Sciatic nerve (tissue), 2 donors: ENCODE measurements at regions of chr7 and their contacts with region 1.

Region 1: DNA sequence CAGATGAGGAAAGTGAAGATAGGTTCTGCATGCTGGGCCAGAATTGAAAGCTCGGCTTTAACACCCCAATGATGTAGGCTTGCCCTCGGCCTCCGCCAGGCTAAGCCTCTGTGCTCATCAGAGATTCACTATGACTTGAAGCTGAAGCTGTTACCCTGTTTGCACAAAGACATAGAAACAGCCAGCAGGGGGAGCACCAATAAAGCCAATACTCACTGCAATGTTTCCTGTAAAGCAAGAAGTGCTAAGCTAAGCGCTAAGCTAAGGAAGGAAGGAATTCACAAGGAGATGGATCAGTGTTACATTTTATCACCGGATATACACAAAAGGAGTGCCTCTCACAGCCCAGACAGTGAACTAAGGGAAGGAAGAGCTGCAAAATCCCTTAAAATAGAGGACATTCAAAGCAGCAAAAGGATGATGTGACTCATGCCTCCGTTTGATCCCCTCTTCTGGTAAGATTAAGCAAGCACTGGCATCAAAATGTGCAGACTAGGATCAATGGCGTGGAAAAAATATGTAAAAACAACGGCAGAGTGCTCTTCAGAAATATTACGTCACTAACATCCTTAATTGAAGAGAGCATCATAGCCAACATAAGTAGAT is 153.8 kb downstream of the COBL start:
- DNase-seq: peak; percentile 84
- ATAC-seq: peak; percentile 88

Region 2: DNA sequence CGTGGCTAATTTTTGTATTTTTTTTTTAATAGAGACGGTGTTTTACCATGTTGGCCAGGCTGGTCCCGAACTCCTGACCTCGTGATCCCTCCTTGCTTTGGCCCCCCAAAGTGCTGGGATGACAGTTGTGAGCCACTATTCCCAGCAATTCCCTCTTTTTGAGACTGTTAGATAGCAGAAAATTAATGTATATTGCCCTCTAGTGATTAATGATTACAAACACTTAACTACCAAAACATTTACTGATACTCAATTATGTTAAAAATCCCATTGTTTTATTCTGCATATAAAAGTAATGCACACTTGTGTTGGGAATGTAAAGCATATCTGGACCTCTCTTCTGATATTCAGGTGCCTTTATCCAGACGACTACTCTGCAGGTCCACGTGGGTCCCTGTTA is 195.0 kb after region 1 on chr7:
- intact Hi-C with region 1: loop called (anchors 5 kb)
- DNase-seq: no peak
- ATAC-seq: no peak